ENCODE measurements at regions of chr1 and their contacts with region 1.

Region 1: GRCh38 chr1:35268282-35269200 is at the start of gene ZMYM4:
- DNase-seq: peak; percentile 96 to 97
- ATAC-seq: peak; percentile 98 to 99 (median 98)
- H3K4me3 ChIP-seq: peak within 1 kb of the TSS; percentile 89
- H3K27ac ChIP-seq: peak within 1 kb of the TSS; percentile 87
- H3K4me1 ChIP-seq: peaks cover 15% of the 10 kb centered on the region
- H3K27me3 ChIP-seq: no peaks in the 10 kb centered on the region
- CTCF ChIP-seq: no peak
- total RNA-seq, gene ZMYM4: 25.3 to 32.6 (median 26.6) TPM

Region 2: DNA sequence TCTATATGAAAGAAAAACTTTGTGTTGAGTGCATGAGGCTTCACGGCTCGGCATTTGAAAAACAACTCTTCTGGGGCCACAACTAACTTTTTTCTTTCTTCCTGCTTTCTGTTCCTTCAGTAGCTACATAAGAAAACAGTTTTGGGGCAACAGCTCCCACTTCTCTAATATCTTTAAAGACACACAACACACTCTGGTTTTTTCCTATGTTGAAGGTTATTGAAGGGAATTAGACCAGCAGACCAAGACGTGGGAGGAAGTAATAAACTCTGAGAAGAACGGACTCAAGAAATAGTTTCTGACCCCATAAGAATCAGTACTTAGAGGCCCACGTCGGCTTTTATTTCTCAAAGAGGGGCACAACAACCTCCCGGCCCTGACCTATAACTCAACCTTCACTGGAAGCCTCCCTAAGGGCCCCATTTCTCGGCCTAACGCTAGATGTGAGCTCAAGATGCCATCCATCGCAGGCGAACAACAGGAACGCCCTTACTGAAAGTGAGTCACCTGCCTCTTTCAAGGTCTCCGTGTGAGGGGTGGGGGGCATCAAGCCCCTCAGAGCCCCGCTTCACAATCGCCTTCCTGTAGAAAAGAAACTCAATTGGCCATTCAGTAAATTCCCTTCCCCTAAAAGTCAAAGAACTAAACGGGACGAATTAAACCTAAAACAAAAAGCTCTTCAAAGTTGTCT is 237.6 kb before region 1 on chr1:
- intact Hi-C with region 1: loop called in 1 of 2 experiments (anchors 5 kb)
- DNase-seq: peak; percentile 16 to 51
- ATAC-seq: peak; percentile 42 to 63 (median 49)
- H3K4me3 ChIP-seq: peak overlapping the region; percentile 91
- H3K27ac ChIP-seq: peak overlapping the region; percentile 89
- H3K4me1 ChIP-seq: peaks cover 8% of the 10 kb centered on the region
- H3K27me3 ChIP-seq: no peaks in the 10 kb centered on the region
- CTCF ChIP-seq: no peak

Region 3: DNA sequence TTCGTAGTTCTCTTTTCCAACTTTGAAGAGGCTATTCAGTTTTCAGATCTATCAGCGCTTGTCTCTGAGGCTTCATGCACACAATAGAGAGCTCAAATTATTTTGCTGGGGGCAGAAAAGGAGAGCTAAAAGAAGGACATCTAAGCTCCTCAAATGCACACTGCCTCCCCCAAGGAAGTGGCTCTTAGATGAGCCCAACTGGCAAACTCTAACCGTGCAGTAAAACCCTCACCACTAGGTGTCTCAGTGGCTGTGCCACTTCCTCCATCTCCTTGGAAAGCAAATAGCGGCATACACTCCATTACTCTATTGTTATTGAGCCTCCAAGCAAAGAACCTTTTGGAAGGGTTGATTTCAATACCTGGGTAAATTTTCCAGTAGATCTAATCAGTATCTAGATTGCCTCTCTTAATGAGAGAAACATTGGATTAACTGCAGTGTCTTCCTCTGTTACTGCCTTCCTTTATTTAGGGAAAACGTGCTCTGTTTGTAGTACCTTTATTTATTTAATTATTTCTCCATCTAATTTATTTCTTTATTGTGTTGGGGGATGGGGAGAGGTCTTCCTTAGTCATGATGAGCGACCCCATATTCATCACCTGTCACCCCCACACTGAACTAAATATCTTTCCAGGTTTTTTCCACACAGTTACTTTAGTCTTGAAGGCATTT is 66.4 kb before region 1 on chr1:
- intact Hi-C with region 1: loop called in 1 of 2 experiments (anchors 5 kb)
- DNase-seq: peak; percentile 34 to 62
- ATAC-seq: peak; percentile 91 to 99 (median 95)
- H3K4me3 ChIP-seq: peak overlapping the region; percentile 15
- H3K27ac ChIP-seq: no peak overlapping the region
- H3K4me1 ChIP-seq: no peaks in the 10 kb centered on the region
- H3K27me3 ChIP-seq: no peaks in the 10 kb centered on the region
- CTCF ChIP-seq: peak; percentile 86

Region 4: DNA sequence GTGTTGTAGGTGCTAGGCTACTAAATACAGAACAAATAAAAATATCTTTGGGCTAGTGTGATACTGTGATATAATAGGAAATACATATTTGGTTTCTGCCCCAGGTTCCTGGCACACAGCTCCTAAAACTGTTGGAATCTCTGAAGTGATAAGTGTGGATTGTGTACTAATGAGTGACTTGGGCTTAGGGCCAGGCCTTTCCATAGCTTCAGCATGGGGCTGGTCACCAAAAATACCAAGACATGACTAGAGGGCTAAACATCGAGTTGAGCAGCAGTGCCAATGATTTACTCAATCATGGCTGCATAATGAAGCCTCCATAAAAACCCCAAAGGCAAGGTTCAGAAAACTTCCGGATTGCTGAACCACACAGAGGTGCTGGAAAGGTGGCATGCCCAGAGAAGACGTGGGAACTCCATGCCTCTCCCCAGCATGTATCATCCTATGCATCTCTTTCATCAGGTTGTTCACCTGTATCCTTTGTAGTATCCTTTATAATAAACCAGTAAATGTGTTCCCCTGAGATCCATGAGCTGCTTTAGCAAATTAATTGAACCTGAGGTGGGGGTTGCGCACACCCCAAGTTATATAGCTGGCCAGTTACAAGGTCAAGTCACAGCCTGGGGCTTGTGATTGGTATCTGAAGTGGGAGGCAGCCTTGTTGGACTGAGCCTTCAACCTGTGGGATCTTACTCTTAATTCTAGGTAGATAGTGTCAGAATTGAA is 51.6 kb after region 1 on chr1:
- intact Hi-C with region 1: loop called in 1 of 2 experiments (anchors 5 kb)
- DNase-seq: no peak
- ATAC-seq: peak; percentile 87 to 98 (median 95)
- H3K4me3 ChIP-seq: peak overlapping the region; percentile 5
- H3K27ac ChIP-seq: peak overlapping the region; percentile 62
- H3K4me1 ChIP-seq: peaks cover 22% of the 10 kb centered on the region
- H3K27me3 ChIP-seq: no peaks in the 10 kb centered on the region
- CTCF ChIP-seq: no peak

Region 5: DNA sequence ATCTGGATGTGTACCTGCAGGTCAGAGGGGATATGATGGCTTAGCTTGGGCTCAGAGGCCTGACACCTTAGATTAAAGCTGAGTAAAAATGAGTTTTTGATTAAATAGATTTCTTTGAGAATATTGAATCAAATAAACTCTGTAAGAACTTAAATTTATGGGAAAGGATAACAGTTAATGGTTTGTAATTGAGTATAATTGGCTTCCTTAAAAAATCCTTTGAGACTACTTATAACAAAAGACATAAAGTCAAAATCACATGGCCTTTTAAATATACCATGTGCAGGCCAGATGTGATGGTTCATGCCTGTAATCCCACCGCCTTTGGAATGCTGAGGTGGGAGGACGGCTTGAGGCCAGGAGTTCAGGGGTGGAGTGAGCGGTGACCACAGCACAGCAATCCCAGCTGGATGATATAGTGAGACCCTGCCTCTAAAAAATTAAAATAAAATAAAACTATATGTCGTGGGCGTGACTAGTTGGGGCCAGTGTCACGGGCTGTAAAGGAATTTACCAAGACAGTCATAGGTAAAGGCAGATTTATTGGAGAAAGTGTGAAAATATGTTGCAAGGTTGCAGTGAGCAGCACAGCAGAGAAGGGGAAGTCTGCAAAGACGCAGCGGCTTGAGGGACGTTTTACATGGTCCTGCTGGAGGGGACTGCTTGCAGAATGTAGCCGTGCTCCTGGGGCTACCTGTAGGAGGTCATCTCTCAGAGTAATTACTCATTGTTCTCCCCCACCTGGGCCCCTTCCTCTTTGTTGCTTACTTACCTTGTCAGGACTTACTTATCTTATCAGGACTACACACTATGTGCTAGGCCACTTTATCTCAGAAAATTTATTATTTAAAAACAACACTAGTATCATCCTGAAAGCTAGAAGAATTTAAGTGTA is 122.3 kb after region 1 on chr1:
- intact Hi-C with region 1: no loop called
- DNase-seq: no peak
- ATAC-seq: no peak
- H3K4me3 ChIP-seq: no peak overlapping the region
- H3K27ac ChIP-seq: no peak overlapping the region
- H3K4me1 ChIP-seq: no peaks in the 10 kb centered on the region
- H3K27me3 ChIP-seq: no peaks in the 10 kb centered on the region
- CTCF ChIP-seq: no peak

Measured in psoas muscle (tissue), 8 donors.